ENCODE measurements at regions of chr20 and their contacts with region 1.

Region 1: GRCh38 chr20:8722276-8722928 is 346.5 kb upstream of the PLCB4 start:
- DNase-seq: peak; percentile 31
- CTCF ChIP-seq: peak; percentile 73

Region 2: DNA sequence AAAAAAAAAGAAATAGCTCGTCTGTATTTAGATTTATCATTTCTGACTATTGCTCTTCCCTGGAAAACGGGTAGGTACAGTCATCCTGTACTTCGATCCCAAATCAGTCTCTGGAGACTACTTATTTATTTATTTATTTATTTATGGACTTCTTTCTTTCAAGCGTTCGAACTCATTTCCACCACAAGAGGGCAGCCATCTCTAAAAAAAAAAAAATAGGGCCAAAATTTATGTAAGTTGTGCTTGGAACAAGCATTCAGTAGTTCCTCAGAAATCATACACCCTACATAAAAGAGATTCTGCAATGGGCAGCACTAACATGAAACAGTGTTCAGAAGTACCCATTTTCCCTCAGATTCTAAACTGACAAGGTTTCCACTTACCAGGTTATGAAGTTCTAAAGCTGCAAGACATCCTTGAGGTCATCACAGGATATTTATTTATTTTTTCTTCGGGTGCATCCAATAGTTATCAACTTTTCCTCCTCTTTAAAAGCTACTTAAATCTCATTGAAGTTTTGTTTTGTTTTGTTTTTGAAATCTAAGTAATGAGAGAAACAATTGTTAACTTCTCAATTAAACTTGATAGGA is 1956.8 kb before region 1 on chr20:
- CTCF ChIA-PET with region 1: interaction called, 10 read pairs
- POLR2A ChIA-PET with region 1: no interaction called
- DNase-seq: peak; percentile 29
- CTCF ChIP-seq: peak; percentile 46

Region 3: GRCh38 chr20:6940046-6940445 is 1782.4 kb before region 1 on chr20:
- CTCF ChIA-PET with region 1: no interaction called
- POLR2A ChIA-PET with region 1: no interaction called
- DNase-seq: no peak
- CTCF ChIP-seq: no peak

Region 4: DNA sequence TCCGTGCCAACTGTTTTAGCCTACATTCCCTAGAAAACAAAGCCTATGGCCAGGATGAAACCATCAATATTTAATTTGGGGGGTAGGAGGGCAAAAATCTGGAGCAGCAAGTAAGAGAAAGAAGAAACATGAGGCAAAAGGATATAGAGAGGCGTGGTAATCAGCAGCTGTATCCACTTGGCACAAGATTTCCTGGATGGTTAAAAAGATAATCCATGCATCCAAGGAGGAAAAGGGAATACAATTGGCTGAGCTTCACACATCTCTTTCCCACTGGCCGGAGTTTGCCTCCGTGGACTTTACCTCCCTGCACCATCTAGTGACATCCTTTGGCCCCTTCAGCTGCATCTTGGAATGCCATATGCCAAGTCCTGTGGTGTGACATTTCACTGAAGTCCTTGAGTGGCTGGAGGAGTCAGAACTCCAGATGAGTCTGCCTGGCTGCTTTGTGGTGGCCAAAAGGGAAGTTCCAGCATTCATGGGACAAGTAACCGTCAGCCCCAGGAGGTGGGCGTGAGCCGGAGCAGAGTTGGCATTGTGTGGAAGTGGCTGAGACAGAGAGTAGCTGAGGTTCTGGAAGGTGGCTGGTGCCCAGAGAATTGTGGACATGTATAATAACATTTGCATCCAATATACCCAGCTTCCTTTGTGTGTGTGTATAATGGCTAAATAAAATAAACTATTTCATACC is 689.1 kb before region 1 on chr20:
- CTCF ChIA-PET with region 1: interaction called, 15 read pairs
- POLR2A ChIA-PET with region 1: no interaction called
- DNase-seq: no peak
- CTCF ChIP-seq: no peak

Region 5: GRCh38 chr20:8131598-8132483 is 590.6 kb before region 1 on chr20 and contains the start of gene PLCB1:
- CTCF ChIA-PET with region 1: interaction called, 34 read pairs
- POLR2A ChIA-PET with region 1: no interaction called
- DNase-seq: peak; percentile 82
- CTCF ChIP-seq: peak; percentile 99

Region 6: DNA sequence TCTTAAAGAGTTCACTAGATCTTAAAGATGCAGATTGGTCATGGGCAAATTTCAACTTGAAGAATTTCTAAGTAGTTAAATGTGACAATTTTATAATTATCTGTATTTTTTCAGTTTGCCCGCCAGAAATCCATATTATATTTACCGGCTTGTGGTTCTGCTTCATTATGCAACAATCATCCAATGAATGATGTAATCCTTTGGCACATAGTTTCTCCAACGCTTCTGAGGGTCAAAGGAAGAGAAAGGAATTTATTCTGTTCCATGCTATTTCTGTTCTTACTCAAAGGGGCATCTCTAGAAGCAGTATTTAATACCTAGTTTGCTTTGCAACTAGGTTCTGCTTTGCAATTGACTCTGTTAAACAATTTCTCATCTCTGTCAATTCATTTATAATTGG is 12.8 kb before region 1 on chr20:
- CTCF ChIA-PET with region 1: interaction called, 80 read pairs
- POLR2A ChIA-PET with region 1: no interaction called
- DNase-seq: no peak
- CTCF ChIP-seq: no peak

Region 7: GRCh38 chr20:8756410-8756809 is 34.0 kb after region 1 on chr20:
- CTCF ChIA-PET with region 1: interaction called, 14 read pairs
- POLR2A ChIA-PET with region 1: no interaction called
- DNase-seq: no peak
- CTCF ChIP-seq: no peak

Measured in GM10248 (cell line).